ENCODE measurements at regions of chr20 and their contacts with region 1.

Region 1: DNA sequence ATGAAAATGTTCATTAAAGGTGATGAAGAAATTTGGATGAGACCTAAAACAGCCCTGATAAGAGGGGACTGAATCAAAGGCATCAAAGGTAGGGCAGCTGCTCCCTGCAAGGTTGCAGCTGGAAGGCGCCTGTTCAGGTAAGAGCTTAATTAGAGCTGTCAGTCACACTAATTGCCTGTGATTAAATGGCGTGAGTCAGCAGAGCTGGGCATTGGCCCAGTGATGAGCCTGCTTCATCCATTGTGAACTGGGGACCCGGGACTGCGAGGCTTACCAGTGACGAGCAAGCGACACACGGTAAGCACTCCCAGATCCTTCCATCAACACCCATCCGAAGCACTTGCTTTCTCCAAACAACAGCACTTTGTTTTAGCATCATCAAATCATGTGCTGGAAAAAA is 621.5 kb upstream of the CDH4 start:
- DNase-seq: no peak

Region 2: DNA sequence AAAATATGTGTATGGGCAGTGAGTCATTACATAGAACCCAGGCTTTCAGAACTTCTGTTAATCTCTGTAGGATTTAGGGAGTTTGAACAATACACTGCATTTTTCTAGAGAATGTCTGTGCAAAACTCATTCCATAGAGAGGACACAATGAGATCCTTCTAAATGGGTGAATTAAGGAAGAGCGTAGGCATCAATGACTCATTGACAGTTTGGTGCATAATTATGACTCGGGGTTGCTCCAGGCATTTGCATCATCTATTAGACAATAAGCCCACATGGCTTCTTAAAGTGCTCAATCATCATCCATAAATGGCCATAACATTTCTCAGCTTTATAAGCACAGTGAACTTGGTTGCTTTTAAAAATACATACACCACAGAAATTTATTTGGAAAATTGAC is 46.9 kb before region 1 on chr20:
- intact Hi-C with region 1: loop called in 1 of 2 experiments (anchors 2 kb)
- DNase-seq: no peak

Region 3: GRCh38 chr20:60962367-60963045 is 331.9 kb after region 1 on chr20:
- intact Hi-C with region 1: no loop called
- DNase-seq: no peak

Measured in posterior vena cava (tissue), 2 donors.